Mammary epithelial cell (primary cell): ENCODE measurements at regions of chr2 and their contacts with region 1.

Region 1: DNA sequence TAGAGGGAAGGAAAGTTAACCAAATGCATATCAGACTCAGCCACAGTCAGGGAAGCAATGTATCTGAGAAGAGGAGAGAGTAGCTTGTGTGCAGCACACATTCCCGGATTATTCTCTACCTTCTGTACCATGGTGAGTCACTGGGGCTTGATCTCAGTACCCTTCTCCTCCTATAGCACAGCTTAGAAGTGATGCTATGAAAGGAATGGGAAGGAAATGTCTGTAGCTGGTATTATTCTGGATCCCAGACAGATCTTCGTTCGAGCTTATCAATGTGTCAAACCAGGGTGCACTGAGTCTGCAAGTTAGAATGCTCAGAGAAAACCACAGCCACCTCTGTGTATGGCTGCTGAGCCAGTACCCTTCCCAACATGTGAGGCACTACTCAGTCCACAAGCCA is 88.0 kb upstream of the NFU1 start:
- DNase-seq: no peak
- H3K4me3 ChIP-seq: no peak overlapping the region
- H3K27ac ChIP-seq: no peak overlapping the region
- H3K4me1 ChIP-seq: no peaks in the 10 kb centered on the region
- H3K27me3 ChIP-seq: no peaks in the 10 kb centered on the region
- CTCF ChIP-seq: no peak

Region 2: GRCh38 chr2:69375494-69376353 is 149.5 kb before region 1 on chr2:
- CTCF ChIA-PET with region 1: no interaction called
- dilution Hi-C with region 1: loop called (anchors 10 kb)
- in situ Hi-C with region 1: no loop called
- intact Hi-C with region 1: no loop called
- DNase-seq: peak; percentile 15
- H3K4me3 ChIP-seq: no peak overlapping the region
- H3K27ac ChIP-seq: no peak overlapping the region
- H3K4me1 ChIP-seq: no peaks in the 10 kb centered on the region
- H3K27me3 ChIP-seq: no peaks in the 10 kb centered on the region
- CTCF ChIP-seq: peak; percentile 50 to 54

Region 3: DNA sequence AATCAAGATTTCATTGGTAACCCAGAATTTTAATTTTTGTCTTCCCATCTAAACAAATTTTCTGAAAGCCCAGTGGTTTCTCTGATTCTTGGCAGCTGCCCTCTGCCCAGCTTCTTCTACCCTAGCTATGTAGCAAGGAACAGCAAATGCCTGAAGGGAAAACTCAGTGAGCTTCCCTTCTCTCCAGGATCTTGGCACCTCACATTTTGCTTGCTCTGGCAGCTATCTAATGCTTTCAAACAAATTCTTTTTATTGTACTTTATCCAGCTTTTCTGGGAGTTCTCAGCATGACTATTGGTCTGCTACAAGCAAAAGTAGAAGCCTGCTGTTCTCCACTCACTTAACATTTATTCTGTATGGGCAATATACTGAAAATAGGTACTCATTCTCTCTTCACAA is 120.0 kb before region 1 on chr2:
- CTCF ChIA-PET with region 1: no interaction called
- dilution Hi-C with region 1: no loop called
- in situ Hi-C with region 1: no loop called
- intact Hi-C with region 1: no loop called
- DNase-seq: no peak
- H3K4me3 ChIP-seq: no peak overlapping the region
- H3K27ac ChIP-seq: no peak overlapping the region
- H3K4me1 ChIP-seq: peaks cover 5% of the 10 kb centered on the region
- H3K27me3 ChIP-seq: no peaks in the 10 kb centered on the region
- CTCF ChIP-seq: no peak